Activated CD4-positive, alpha-beta T cell treated with anti-CD3 and anti-CD28 coated beads for 36 hours (primary cell): ENCODE measurements at regions of chr11 and their contacts with region 1.

Region 1: DNA sequence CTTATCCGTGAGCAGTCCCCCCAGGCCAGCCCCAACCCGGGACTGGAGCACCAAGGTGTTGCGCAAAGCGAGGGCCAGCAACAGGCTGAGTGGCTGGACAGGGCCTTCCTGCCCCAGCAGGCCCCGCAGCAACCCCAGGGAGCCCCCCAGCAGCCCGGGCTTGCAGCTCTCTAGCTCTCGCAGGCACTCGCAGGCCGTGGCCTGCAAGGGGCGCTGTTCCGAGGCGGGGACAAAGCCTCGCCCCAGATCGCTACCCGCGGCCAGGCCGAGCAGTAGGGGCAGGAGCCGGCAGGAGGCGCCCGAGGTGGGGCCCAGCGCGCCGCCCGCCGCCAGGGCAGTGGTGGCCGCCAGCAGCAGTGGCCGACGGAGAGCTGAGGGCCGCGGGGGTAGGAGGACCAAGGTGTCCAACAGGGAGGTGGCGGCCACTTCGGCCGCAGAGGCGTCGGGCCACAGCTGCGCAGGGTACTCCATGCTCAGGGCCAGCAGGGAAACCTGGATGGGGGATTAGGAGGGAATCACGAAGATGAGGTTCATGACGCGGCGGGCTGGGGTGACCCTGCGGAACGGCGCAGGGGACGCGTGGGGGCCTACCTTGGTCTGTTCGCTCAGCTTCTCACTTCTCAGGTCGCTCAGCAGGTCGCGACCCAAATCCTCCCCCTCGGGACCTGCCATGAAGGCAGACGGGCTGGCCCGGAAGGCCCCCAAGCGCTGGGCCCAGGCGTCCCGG is 762 bp downstream of the AP5B1 start:
- DNase-seq: peak; percentile 94
- ATAC-seq: peak; percentile 81
- H3K4me3 Mint-ChIP-seq: peak overlapping the region; percentile 87
- H3K27ac Mint-ChIP-seq: peak overlapping the region; percentile 83
- H3K4me1 Mint-ChIP-seq: peaks cover 27% of the 10 kb centered on the region
- H3K27me3 Mint-ChIP-seq: peaks cover 10% of the 10 kb centered on the region

Region 2: DNA sequence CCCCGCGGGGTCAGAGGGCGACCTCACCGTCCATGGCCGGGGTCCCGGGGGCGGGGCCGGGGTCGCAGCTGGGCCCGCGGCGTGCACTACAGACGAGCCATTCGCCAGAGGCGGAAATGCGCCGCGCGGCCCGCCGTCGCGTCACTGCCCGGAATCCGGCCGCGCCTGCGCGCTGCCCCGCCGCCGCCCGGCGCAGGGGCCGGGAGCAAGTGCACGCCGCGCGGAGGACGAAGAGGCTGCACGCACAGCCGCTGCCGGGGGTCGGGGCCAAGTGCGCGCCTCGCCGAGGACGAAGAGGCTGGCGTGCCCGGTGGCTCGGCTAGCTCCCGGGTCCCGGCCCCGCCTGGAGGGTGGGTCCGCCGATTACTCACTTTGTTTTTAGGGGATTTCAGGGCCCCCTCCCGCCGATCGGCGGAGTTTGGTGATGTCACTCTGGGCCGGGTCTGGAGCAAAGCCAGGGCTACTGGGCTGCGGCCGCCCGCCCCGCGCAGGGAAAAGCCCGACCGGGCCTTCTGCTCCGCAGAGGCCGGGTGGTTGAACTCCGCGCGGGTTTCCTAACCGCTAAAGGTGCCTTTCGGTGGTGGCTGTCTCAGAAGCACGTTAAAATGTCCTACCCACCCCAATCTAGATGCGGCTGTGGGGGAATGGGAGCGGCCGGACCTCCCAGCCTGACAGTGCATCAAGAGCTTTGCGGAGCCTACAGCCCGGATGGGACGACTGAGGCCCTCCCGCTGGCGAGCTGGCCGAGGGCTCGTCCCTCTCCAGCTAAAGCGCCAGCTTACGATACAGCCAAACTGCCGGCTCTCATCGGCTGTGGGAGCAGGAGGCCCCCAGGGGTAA is 117.0 kb before region 1 on chr11 and contains the start of gene RELA:
- CTCF ChIA-PET with region 1: interaction called, 4 read pairs
- POLR2A ChIA-PET with region 1: no interaction called
- intact Hi-C with region 1: loop called in 1 of 2 experiments (anchors 2 kb)
- DNase-seq: peak; percentile 96
- ATAC-seq: peak; percentile 90
- H3K4me3 Mint-ChIP-seq: peak within 1 kb of the TSS; percentile 88
- H3K27ac Mint-ChIP-seq: peak within 1 kb of the TSS; percentile 97
- H3K4me1 Mint-ChIP-seq: peaks cover 41% of the 10 kb centered on the region
- H3K27me3 Mint-ChIP-seq: no peaks in the 10 kb centered on the region
- total RNA-seq, gene RELA: 76.9 to 109 TPM

Region 3: GRCh38 chr11:65720237-65720934 is 59.6 kb before region 1 on chr11 and contains the start of gene RNASEH2C:
- CTCF ChIA-PET with region 1: interaction called, 6 read pairs
- POLR2A ChIA-PET with region 1: interaction called, 8 read pairs
- intact Hi-C with region 1: loop called in 1 of 2 experiments (anchors 1 kb)
- DNase-seq: peak; percentile 92
- ATAC-seq: peak; percentile 94
- H3K4me3 Mint-ChIP-seq: peak within 1 kb of the TSS; percentile 84
- H3K27ac Mint-ChIP-seq: peak within 1 kb of the TSS; percentile 88
- H3K4me1 Mint-ChIP-seq: peaks cover 23% of the 10 kb centered on the region
- H3K27me3 Mint-ChIP-seq: no peaks in the 10 kb centered on the region
- total RNA-seq, gene RNASEH2C: 72.5 to 96.8 TPM

Region 4: DNA sequence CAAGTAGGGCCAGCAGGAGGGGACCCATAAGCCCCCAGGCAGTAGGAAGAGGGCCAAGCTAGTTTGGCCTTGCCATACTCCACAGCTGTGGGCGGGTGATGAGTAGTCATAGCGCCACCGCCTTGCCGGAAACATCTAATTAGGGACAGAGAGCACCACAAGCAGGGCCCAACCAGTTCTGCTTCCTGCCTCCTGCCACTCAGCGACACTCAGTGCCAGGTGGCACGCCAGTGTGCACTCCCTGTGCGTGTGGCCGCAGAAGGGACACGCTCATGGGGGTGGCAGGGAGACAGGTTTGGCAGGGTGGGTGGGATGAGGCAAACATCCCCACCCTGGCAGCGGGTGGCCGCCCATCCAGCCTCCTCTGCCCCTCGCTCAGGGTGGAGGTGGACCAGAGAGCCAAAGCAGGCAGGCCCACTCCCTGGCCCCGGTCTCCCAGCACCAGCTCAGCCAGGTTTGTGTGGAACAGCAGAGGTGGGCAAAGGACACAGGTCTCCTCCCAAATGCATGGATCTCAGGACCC is 11.7 kb after region 1 on chr11:
- CTCF ChIA-PET with region 1: interaction called, 11 read pairs
- POLR2A ChIA-PET with region 1: interaction called, 5 read pairs
- intact Hi-C with region 1: no loop called
- DNase-seq: no peak
- ATAC-seq: no peak
- H3K4me3 Mint-ChIP-seq: no peak overlapping the region
- H3K27ac Mint-ChIP-seq: no peak overlapping the region
- H3K4me1 Mint-ChIP-seq: peaks cover 6% of the 10 kb centered on the region
- H3K27me3 Mint-ChIP-seq: peaks cover 23% of the 10 kb centered on the region

Region 5: GRCh38 chr11:65833297-65834030 is 53.5 kb after region 1 on chr11 and contains the start of gene SNX32:
- CTCF ChIA-PET with region 1: interaction called, 13 read pairs
- POLR2A ChIA-PET with region 1: no interaction called
- intact Hi-C with region 1: loop called in 1 of 2 experiments (anchors 1 kb)
- DNase-seq: peak; percentile 98
- ATAC-seq: peak; percentile 99
- H3K4me3 Mint-ChIP-seq: no peak within 1 kb of the TSS
- H3K27ac Mint-ChIP-seq: no peak within 1 kb of the TSS
- H3K4me1 Mint-ChIP-seq: peaks cover 22% of the 10 kb centered on the region
- H3K27me3 Mint-ChIP-seq: no peaks in the 10 kb centered on the region
- total RNA-seq, gene SNX32: 2.9 to 3.0 TPM

Region 6: DNA sequence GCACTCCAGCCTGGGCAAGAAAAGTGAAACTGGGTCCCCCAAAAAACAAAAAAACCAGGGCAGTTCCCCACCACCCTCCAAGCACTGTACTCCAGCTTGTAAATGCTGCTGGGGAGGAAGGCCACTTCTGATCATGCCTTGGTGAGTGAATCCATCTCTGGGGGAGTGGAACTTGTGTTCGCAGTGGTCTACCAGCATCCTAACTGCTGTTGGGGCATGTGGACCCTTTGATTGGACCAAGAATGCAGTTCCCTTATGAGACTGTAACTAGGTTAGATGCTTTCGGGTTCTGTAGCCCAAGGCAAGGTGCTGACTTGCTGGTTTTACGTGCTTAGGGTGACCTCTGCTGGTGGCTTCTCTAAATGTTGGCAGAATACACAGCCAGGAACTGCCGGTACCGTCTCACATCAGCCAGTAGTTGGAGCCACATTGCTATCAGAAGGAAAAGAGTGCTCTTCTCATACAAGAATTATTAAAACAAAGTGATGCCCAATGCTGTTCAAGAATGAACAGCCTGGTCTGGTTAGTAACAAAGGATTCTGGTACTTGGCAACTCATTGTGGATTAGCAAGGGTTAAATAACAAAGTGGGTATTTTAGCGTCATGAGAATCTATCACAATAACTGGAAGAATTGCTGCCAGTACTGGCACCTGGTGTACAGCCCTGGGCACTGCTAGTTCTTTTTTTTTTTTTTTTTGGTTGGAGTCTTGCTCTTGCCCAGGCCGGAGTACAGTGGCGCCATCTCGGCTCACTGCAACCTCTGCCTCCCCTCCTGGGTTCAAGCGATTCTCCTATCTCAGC is 209.0 kb after region 1 on chr11:
- CTCF ChIA-PET with region 1: interaction called, 4 read pairs
- POLR2A ChIA-PET with region 1: interaction called, 3 read pairs
- intact Hi-C with region 1: loop called in 1 of 2 experiments (anchors 1 kb)
- DNase-seq: peak; percentile 95
- ATAC-seq: peak; percentile 99
- H3K4me3 Mint-ChIP-seq: no peak overlapping the region
- H3K27ac Mint-ChIP-seq: peak overlapping the region; percentile 59
- H3K4me1 Mint-ChIP-seq: peaks cover 2% of the 10 kb centered on the region
- H3K27me3 Mint-ChIP-seq: no peaks in the 10 kb centered on the region